Mammary epithelial cell (primary cell): ENCODE measurements at regions of chr11 and their contacts with region 1.

Region 1: GRCh38 chr11:12963792-12964536 is 45.2 kb upstream of the RASSF10 start:
- DNase-seq: peak; percentile 46
- H3K4me3 ChIP-seq: no peak overlapping the region
- H3K27ac ChIP-seq: no peak overlapping the region
- H3K4me1 ChIP-seq: peaks cover 22% of the 10 kb centered on the region
- H3K27me3 ChIP-seq: no peaks in the 10 kb centered on the region
- CTCF ChIP-seq: peak; percentile 86 to 90

Region 2: DNA sequence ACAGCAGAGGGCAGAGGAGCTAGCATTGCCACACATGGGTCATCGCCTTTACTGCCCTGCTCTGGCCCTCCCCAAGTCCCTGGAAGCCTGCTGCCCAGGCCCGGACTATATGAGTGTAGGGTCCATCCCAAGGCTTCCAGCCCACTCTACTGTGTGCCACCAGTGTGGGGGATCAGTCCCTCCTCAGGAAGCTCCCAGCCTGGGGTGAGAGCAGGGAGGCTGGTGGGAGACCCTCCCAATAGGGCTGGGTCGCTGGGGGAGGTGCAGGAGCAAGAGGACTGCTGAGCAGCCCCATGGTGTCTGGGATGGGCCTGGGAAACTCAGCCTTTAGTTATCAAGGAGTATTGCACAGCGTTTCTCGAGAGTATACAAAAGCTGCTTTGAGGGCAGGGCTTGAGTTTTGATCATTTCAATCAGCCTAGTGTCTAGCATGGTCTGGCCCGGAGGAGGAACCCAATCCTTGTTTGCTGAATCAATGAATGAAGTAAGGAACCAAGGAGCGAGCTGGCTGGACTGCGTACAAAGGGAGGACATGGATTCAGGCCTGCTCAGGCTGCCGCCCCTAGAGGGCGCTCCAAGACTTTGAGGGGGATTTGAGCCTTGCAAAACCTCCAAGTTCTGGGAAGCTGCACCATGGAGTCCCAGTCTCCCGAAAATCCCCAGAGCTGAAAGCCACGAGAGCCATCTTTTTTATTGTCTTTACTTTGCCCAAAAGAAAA is 675.6 kb before region 1 on chr11:
- CTCF ChIA-PET with region 1: no interaction called
- dilution Hi-C with region 1: no loop called
- in situ Hi-C with region 1: no loop called
- intact Hi-C with region 1: loop called (anchors 2 kb)
- DNase-seq: peak; percentile 76
- H3K4me3 ChIP-seq: no peak overlapping the region
- H3K27ac ChIP-seq: peak overlapping the region; percentile 77
- H3K4me1 ChIP-seq: peaks cover 49% of the 10 kb centered on the region
- H3K27me3 ChIP-seq: no peaks in the 10 kb centered on the region
- CTCF ChIP-seq: peak; percentile 91 to 98

Region 3: DNA sequence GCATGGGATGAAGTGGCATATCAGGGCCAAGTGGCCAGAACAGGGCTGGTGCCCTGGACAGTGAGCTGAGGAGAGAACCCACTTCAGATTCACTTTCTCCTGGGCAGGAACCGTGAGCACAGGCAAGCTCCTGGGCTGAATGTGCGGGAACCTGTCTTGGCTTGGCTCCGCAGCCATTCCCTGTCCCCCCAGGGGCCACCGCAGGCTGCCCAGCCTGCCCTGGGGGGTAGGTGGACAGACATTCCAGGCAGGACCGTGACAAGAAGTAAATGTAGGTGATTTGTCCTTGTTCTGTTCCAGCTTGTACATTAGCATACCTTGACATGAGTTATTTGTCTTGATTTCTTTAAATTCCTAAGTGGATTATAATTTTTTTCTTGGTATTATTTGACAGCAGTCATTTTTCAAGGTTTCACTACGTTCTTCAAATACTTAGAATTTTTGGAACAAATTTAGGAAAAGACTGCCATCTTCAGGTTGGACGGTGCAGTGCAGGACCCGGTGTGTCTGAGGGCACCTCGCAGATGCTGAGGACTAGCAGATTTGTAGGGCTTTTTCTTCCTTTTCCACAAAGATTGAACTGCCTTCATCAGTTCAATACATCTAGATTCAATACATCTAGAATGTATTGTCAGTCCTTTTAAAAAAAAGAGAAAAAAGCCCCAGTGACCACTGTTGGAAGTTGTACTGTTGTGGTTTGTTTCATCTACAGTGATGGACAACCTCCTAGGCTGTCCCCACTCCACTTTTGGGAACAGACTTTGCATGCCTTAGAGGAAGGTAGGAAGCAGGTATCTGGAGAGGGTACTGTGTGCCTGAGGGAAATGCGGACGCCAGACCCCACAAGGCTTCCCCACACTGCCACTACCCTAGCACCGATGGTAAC is 69.9 kb before region 1 on chr11:
- CTCF ChIA-PET with region 1: no interaction called
- dilution Hi-C with region 1: no loop called
- in situ Hi-C with region 1: no loop called
- intact Hi-C with region 1: no loop called
- DNase-seq: peak; percentile 42
- H3K4me3 ChIP-seq: no peak overlapping the region
- H3K27ac ChIP-seq: no peak overlapping the region
- H3K4me1 ChIP-seq: peaks cover 18% of the 10 kb centered on the region
- H3K27me3 ChIP-seq: no peaks in the 10 kb centered on the region
- CTCF ChIP-seq: peak; percentile 83 to 91

Region 4: GRCh38 chr11:12942157-12942556 is 21.8 kb before region 1 on chr11:
- CTCF ChIA-PET with region 1: no interaction called
- dilution Hi-C with region 1: no loop called
- in situ Hi-C with region 1: no loop called
- intact Hi-C with region 1: no loop called
- DNase-seq: no peak
- H3K4me3 ChIP-seq: no peak overlapping the region
- H3K27ac ChIP-seq: no peak overlapping the region
- H3K4me1 ChIP-seq: no peaks in the 10 kb centered on the region
- H3K27me3 ChIP-seq: no peaks in the 10 kb centered on the region
- CTCF ChIP-seq: no peak

Region 5: DNA sequence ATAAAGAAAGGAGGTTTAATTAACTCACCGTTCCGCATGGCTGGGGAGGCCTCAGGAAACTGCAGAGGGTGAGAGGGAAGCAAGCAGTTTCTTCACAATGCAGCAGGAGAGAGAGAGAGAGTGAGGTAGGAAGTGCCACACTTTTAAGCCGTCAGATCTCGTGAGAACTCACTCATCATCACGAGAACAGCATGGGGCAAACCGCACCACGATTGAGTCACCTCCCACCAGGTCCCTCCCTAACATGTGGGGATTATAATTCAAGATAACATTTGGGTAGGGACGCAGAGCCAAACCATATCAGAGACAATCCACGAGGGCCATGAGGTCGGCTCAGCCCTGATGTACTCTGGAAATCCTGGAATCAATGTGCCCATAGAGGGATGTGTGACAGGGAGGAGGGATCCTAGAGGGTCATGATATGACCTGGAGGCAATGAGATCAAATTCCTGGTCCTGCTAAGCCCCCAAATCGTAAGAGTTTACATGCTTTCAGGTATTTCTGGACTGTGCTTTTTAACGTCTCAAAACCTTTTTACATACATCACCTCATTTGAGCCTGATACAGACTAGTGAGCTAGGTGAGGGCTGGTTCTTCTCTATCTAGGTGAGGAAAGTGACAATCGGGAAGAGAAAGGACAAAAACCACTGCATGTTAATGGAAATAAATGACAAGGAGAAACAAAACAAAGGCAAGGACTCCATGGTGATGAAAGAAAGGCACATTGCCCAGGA is 25.6 kb after region 1 on chr11:
- CTCF ChIA-PET with region 1: no interaction called
- dilution Hi-C with region 1: no loop called
- in situ Hi-C with region 1: no loop called
- intact Hi-C with region 1: loop called (anchors 2 kb)
- DNase-seq: peak; percentile 74
- H3K4me3 ChIP-seq: no peak overlapping the region
- H3K27ac ChIP-seq: no peak overlapping the region
- H3K4me1 ChIP-seq: peaks cover 16% of the 10 kb centered on the region
- H3K27me3 ChIP-seq: no peaks in the 10 kb centered on the region
- CTCF ChIP-seq: no peak

Region 6: GRCh38 chr11:13073119-13073981 is 109.4 kb after region 1 on chr11:
- CTCF ChIA-PET with region 1: no interaction called
- dilution Hi-C with region 1: no loop called
- in situ Hi-C with region 1: no loop called
- intact Hi-C with region 1: loop called (anchors 5 kb)
- DNase-seq: peak; percentile 100
- H3K4me3 ChIP-seq: no peak overlapping the region
- H3K27ac ChIP-seq: peak overlapping the region; percentile 88
- H3K4me1 ChIP-seq: peaks cover 40% of the 10 kb centered on the region
- H3K27me3 ChIP-seq: no peaks in the 10 kb centered on the region
- CTCF ChIP-seq: no peak

Region 7: GRCh38 chr11:13210424-13210823 is 246.5 kb after region 1 on chr11:
- CTCF ChIA-PET with region 1: interaction called, 3 read pairs
- dilution Hi-C with region 1: no loop called
- in situ Hi-C with region 1: no loop called
- intact Hi-C with region 1: loop called (anchors 1 kb)
- DNase-seq: peak; percentile 63
- H3K4me3 ChIP-seq: no peak overlapping the region
- H3K27ac ChIP-seq: no peak overlapping the region
- H3K4me1 ChIP-seq: peaks cover 33% of the 10 kb centered on the region
- H3K27me3 ChIP-seq: no peaks in the 10 kb centered on the region
- CTCF ChIP-seq: peak; percentile 77 to 79